HepG2 (cell line): ENCODE measurements at regions of chr11 and their contacts with region 1.

Region 1: DNA sequence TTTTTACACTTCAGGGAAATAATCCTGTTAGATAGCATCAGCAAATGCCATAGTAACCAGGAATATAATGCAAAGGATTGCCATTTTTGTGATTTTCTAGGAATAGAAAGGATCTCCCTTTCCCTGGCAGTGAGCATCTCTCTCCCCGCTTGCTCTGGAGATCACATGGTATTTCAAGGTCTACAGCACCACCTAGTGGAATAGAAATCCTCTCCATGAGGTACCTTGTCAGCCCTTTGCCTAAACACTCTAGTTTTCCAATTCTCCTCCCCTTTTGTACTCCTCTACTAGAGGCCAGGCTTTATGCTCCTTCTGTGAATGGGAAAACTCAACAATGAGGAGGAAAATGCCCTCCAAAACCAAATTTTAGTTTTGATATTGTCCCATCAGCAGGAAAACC is 78.4 kb downstream of the XRRA1 start:
- DNase-seq: peak; percentile 60
- ATAC-seq: peak; percentile 79
- H3K4me3 ChIP-seq: no peak overlapping the region
- H3K27ac ChIP-seq: no peak overlapping the region
- H3K4me1 ChIP-seq: no peaks in the 10 kb centered on the region
- H3K27me3 ChIP-seq: no peaks in the 10 kb centered on the region
- CTCF ChIP-seq: peak; percentile 54
- EP300 ChIP-seq: no peak
- POLR2A ChIP-seq: no peak
- RAD21 ChIP-seq: no peak

Region 2: DNA sequence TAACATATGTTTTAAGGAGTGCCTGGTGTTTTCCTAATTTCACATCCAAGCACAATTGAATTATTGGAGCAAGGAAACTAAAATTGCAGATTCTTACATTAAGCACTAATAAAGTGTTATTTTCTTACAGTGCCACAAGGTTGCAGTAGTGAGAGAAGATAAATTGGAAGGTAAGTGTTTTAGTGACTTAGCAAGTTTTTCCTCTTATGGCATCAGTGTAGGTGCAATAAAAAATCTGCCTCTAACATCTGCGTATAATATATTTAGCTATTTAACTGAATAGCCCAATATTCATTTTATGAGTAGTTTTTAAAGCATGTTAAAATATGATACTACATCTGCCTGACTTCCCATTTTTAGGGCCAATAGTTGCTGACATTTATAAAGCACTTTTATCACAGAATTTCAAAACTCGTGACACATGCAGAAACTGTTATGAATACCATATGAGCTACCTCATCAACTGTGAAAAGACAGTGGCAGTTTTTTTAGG is 259.1 kb before region 1 on chr11:
- CTCF ChIA-PET with region 1: interaction called, 3 read pairs
- POLR2A ChIA-PET with region 1: no interaction called
- in situ Hi-C with region 1: loop called (anchors 10 kb)
- intact Hi-C with region 1: no loop called
- DNase-seq: peak; percentile 36
- ATAC-seq: no peak
- H3K4me3 ChIP-seq: no peak overlapping the region
- H3K27ac ChIP-seq: no peak overlapping the region
- H3K4me1 ChIP-seq: peaks cover 19% of the 10 kb centered on the region
- H3K27me3 ChIP-seq: no peaks in the 10 kb centered on the region; a peak in 1 of 5 replicates
- CTCF ChIP-seq: peak; percentile 52
- EP300 ChIP-seq: no peak
- POLR2A ChIP-seq: no peak
- RAD21 ChIP-seq: no peak

Region 3: GRCh38 chr11:74696932-74697687 is 173.4 kb before region 1 on chr11:
- CTCF ChIA-PET with region 1: interaction called, 14 read pairs
- POLR2A ChIA-PET with region 1: no interaction called
- in situ Hi-C with region 1: loop called (anchors 5 kb)
- intact Hi-C with region 1: loop called (anchors 1 kb)
- DNase-seq: peak; percentile 26
- ATAC-seq: peak; percentile 66
- H3K4me3 ChIP-seq: peak overlapping the region; percentile 50 to 69 (median 55)
- H3K27ac ChIP-seq: no peak overlapping the region
- H3K4me1 ChIP-seq: peaks cover 26% of the 10 kb centered on the region
- H3K27me3 ChIP-seq: peaks cover 0 to 21% of the 10 kb centered on the region in 2 experiments; a peak in 3 of 5 replicates
- CTCF ChIP-seq: no peak
- EP300 ChIP-seq: no peak
- POLR2A ChIP-seq: no peak
- RAD21 ChIP-seq: no peak

Region 4: DNA sequence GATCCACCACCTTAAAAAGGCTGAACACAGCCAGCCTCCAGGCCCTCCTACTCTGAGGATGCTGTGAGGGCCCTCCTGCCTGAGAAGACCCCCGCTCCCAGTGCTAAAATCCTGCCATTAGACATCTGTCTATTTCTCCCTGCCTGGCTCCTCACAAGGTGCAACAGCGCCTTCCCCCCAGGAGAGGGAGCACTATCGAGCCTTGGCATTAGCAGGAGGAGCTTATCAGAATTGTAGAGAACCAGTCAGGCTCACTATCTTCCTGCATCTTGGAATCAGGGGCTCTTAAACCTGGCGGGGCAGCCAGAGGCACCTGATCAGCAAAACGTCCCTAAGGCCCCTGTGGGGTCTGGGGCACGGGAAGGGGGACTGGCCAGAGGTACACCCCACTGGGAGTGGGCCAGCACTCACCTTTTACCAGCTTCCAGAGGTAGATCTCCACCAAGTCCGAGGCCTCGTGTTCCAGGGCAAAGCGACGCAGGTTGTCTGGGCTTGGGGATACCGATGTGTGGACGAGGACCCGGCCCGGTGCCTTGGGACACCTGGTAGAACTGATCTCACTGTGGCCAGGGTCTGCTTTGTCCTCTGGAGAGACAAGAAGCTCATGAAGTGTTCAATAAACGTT is 168.0 kb before region 1 on chr11:
- CTCF ChIA-PET with region 1: interaction called, 14 read pairs
- POLR2A ChIA-PET with region 1: no interaction called
- in situ Hi-C with region 1: loop called (anchors 5 kb)
- intact Hi-C with region 1: loop called (anchors 1 kb)
- DNase-seq: peak; percentile 63
- ATAC-seq: peak; percentile 80
- H3K4me3 ChIP-seq: no peak overlapping the region
- H3K27ac ChIP-seq: no peak overlapping the region
- H3K4me1 ChIP-seq: peaks cover 6% of the 10 kb centered on the region
- H3K27me3 ChIP-seq: peaks cover 4 to 26% of the 10 kb centered on the region in 2 experiments; a peak in 2 of 5 replicates
- CTCF ChIP-seq: peak; percentile 89
- EP300 ChIP-seq: no peak
- POLR2A ChIP-seq: no peak
- RAD21 ChIP-seq: peak; percentile 75

Region 5: DNA sequence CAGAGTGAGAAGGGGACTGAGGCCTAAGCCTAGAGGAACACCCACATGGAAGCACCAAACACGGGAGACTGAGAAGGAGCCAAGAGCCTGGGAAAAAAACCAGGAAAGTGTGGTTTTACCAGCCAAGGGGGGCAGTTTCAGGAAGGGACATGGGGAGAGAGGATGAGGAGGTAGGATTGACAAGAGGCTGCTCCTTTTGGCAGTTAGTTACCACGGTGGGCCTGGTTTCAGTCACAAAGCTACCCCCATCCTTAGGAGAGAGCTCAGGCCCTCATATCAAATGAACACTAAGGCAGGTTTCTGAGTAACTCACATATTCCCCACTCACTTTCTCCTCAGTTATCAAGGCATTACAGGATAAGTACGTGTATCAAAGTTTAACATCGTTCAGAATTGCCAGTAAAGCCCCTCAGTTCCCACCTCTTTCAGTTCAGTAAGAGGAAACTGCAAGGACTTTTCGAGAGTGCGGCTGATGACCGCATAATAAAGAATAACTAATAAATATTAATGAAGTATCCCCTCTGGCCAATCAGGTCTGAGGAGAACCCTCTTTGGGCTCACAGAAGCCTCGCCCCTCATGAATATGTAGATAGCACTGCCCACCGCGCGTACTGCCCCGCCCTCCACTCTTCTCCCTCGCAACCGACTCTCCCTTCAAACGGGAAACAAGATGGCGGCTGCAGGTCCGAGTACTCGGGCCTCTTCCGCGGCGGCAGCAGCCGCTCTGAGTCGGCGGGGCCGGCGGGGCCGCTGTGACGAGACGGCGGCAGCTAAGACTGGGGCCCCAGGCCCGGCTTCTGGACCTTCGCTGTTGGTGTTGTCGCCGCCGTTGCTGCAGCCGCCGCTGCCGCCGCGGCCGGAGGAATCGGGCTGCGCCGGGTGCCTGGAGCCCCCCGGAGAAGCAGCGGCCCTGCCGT is 122.0 kb before region 1 on chr11 and contains the start of gene RNF169:
- CTCF ChIA-PET with region 1: no interaction called
- POLR2A ChIA-PET with region 1: no interaction called
- in situ Hi-C with region 1: no loop called
- intact Hi-C with region 1: loop called (anchors 10 kb)
- DNase-seq: peak; percentile 91
- ATAC-seq: peak; percentile 97
- H3K4me3 ChIP-seq: peak within 1 kb of the TSS; percentile 71 to 78 (median 77)
- H3K27ac ChIP-seq: peak within 1 kb of the TSS; percentile 93
- H3K4me1 ChIP-seq: peaks cover 45% of the 10 kb centered on the region
- H3K27me3 ChIP-seq: no peaks in the 10 kb centered on the region; a peak in 1 of 5 replicates
- CTCF ChIP-seq: no peak
- EP300 ChIP-seq: no peak
- POLR2A ChIP-seq: peak; percentile 67 to 72
- RAD21 ChIP-seq: 0 out of 2 replicates have a peak, but pooled peaks have one; percentile 12
- total RNA-seq, gene RNF169: 14.2 and 17.0 TPM in 2 replicates

Region 6: GRCh38 chr11:74909385-74909784 is 38.9 kb after region 1 on chr11:
- CTCF ChIA-PET with region 1: no interaction called
- POLR2A ChIA-PET with region 1: no interaction called
- in situ Hi-C with region 1: no loop called
- intact Hi-C with region 1: no loop called
- DNase-seq: no peak
- ATAC-seq: no peak
- H3K4me3 ChIP-seq: no peak overlapping the region
- H3K27ac ChIP-seq: no peak overlapping the region
- H3K4me1 ChIP-seq: peaks cover 5% of the 10 kb centered on the region; the same call in 1 of the 2 replicates
- H3K27me3 ChIP-seq: no peaks in the 10 kb centered on the region
- CTCF ChIP-seq: no peak
- EP300 ChIP-seq: no peak
- POLR2A ChIP-seq: no peak
- RAD21 ChIP-seq: no peak

Region 7: DNA sequence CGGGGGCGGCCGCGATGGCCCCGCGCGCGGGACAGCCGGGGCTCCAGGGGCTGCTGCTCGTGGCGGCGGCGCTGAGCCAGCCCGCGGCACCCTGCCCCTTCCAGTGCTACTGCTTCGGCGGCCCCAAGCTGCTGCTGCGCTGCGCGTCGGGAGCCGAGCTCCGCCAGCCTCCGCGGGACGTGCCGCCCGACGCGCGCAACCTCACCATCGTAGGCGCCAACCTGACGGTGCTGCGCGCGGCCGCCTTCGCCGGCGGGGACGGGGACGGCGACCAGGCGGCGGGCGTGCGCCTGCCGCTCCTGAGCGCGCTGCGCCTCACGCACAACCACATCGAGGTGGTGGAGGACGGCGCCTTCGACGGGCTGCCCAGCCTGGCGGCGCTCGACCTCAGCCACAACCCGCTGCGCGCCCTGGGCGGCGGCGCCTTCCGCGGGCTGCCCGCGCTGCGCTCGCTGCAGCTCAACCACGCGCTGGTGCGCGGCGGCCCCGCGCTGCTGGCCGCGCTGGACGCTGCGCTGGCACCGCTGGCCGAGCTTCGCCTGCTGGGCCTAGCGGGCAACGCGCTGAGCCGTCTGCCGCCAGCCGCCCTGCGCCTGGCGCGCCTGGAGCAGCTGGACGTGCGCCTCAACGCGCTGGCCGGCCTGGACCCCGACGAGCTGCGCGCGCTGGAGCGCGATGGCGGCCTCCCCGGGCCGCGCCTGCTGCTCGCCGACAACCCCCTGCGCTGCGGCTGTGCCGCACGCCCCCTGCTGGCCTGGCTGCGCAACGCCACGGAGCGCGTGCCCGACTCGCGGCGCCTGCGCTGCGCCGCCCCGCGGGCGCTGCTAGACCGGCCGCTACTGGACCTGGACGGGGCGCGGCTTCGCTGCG is 370.8 kb after region 1 on chr11:
- CTCF ChIA-PET with region 1: no interaction called
- POLR2A ChIA-PET with region 1: no interaction called
- in situ Hi-C with region 1: no loop called
- intact Hi-C with region 1: no loop called
- DNase-seq: peak; percentile 57
- ATAC-seq: peak; percentile 86
- H3K4me3 ChIP-seq: peak overlapping the region; percentile 46 to 74 (median 46); a peak in 5 of 6 replicates
- H3K27ac ChIP-seq: no peak overlapping the region
- H3K4me1 ChIP-seq: peaks cover 15% of the 10 kb centered on the region; the same call in 1 of the 2 replicates
- H3K27me3 ChIP-seq: peaks cover 15 to 63% of the 10 kb centered on the region in 2 experiments
- CTCF ChIP-seq: peak; percentile 76
- EP300 ChIP-seq: no peak
- POLR2A ChIP-seq: no peak
- RAD21 ChIP-seq: peak; percentile 97